Activated B cell treated with CpG ODN at 0.5 μM for 24 hours (primary cell): ENCODE measurements at regions of chr1 and their contacts with region 1.

Region 1: DNA sequence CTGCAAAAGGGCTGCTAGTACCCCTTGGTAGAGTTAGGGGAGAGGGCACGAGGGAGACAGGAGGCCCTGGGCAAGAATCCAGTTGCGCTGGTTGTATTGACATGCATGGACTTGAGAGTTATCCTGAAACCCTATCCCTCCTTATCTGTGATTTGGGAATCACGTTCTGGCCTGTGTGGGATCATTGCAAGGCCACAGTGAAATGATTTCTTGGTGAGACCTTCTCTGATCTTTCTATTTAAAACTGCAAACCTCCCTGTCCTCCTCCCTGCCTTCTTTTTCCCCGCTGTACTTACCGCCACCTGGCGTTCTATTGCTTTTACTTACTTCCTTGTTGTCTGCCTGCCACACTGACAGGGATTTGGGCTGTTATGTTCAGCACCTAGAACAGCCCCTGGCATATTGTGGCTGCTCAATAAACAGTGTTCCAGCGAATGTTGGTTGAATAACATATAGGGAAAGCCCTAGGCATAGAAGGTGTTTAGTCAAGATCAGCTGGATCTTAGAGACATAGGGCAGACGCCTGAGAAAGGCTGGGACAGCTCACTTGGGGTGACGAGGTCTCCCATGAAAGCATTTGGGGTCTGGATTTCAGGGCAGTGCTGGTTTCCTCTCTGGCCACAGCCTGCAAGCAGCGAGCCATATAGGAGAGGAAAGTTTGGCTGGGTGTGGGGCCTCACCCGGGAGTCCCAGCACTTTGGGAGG is 25.6 kb downstream of the ALPL start:
- DNase-seq: no peak
- ATAC-seq: peak; percentile 74
- H3K4me3 Mint-ChIP-seq: no peak overlapping the region
- H3K27ac Mint-ChIP-seq: no peak overlapping the region
- H3K4me1 Mint-ChIP-seq: peaks cover 5% of the 10 kb centered on the region
- H3K27me3 Mint-ChIP-seq: peaks cover 19% of the 10 kb centered on the region
- CTCF ChIP-seq: no peak

Region 2: GRCh38 chr1:20174937-20175666 is 1359.7 kb before region 1 on chr1:
- CTCF ChIA-PET with region 1: no interaction called
- POLR2A ChIA-PET with region 1: interaction called, 10 read pairs
- intact Hi-C with region 1: no loop called
- DNase-seq: no peak
- ATAC-seq: no peak
- H3K4me3 Mint-ChIP-seq: no peak overlapping the region
- H3K27ac Mint-ChIP-seq: no peak overlapping the region
- H3K4me1 Mint-ChIP-seq: peaks cover 22% of the 10 kb centered on the region
- H3K27me3 Mint-ChIP-seq: peaks cover 6% of the 10 kb centered on the region
- CTCF ChIP-seq: no peak

Region 3: GRCh38 chr1:21517161-21517589 is 17.7 kb before region 1 on chr1:
- CTCF ChIA-PET with region 1: interaction called, 36 read pairs
- POLR2A ChIA-PET with region 1: interaction called, 7 read pairs
- intact Hi-C with region 1: loop called (anchors 1 kb)
- DNase-seq: no peak
- ATAC-seq: peak; percentile 6
- H3K4me3 Mint-ChIP-seq: peak overlapping the region; percentile 39
- H3K27ac Mint-ChIP-seq: peak overlapping the region; percentile 96
- H3K4me1 Mint-ChIP-seq: peaks cover 82% of the 10 kb centered on the region
- H3K27me3 Mint-ChIP-seq: no peaks in the 10 kb centered on the region
- CTCF ChIP-seq: no peak